H1 (cell line): ENCODE measurements at regions of chr15 and their contacts with region 1.

Region 1: GRCh38 chr15:90482124-90483011 is 47.4 kb upstream of the CRTC3 start:
- DNase-seq: peak in 1 of 2 experiments; percentile 55
- H3K4me3 ChIP-seq: no peak overlapping the region
- H3K27ac ChIP-seq: no peak overlapping the region
- H3K4me1 ChIP-seq: no peaks in the 10 kb centered on the region
- H3K27me3 ChIP-seq: no peaks in the 10 kb centered on the region
- CTCF ChIP-seq: peak in 2 of 3 experiments; percentile 75; a peak in 3 of 4 replicates
- EP300 ChIP-seq: no peak
- POLR2A ChIP-seq: no peak
- RAD21 ChIP-seq: peak; percentile 93

Region 2: DNA sequence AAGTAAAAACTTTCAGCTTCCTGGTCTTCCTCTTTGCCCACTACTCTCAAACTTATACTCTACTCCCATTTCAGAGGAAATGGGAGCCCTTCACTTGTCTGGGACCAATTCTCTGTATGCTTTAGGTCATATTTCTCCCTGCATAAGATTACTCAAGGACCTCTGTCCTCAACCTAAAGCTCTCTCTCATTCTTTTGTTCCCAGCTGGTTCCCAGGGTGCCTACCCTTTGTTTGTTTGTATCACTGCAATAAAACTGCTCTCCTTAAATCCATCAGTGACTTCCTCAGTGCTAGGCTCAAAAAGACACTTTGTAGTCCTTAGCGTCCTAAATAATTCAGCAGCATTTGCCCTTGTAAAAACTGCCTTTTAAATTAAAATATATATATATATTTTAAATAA is 214.0 kb before region 1 on chr15:
- CTCF ChIA-PET with region 1: no interaction called
- POLR2A ChIA-PET with region 1: no interaction called
- DNase-seq: no peak
- H3K4me3 ChIP-seq: peak overlapping the region in 2 of 4 experiments; percentile 2 to 76; a peak in 1 of 8 replicates
- H3K27ac ChIP-seq: no peak overlapping the region
- H3K4me1 ChIP-seq: peaks cover 0 to 15% (median 7%) of the 10 kb centered on the region in 4 experiments; a peak in 5 of 7 replicates
- H3K27me3 ChIP-seq: no peaks in the 10 kb centered on the region
- CTCF ChIP-seq: no peak
- EP300 ChIP-seq: no peak
- POLR2A ChIP-seq: no peak
- RAD21 ChIP-seq: no peak

Region 3: GRCh38 chr15:90291679-90292356 is 190.6 kb before region 1 on chr15:
- CTCF ChIA-PET with region 1: interaction called, 18 read pairs
- POLR2A ChIA-PET with region 1: no interaction called
- DNase-seq: no peak
- H3K4me3 ChIP-seq: no peak overlapping the region
- H3K27ac ChIP-seq: no peak overlapping the region
- H3K4me1 ChIP-seq: peaks cover 0 to 12% (median 6%) of the 10 kb centered on the region in 4 experiments; a peak in 6 of 7 replicates
- H3K27me3 ChIP-seq: no peaks in the 10 kb centered on the region
- CTCF ChIP-seq: no peak
- EP300 ChIP-seq: no peak
- POLR2A ChIP-seq: no peak
- RAD21 ChIP-seq: no peak

Region 4: DNA sequence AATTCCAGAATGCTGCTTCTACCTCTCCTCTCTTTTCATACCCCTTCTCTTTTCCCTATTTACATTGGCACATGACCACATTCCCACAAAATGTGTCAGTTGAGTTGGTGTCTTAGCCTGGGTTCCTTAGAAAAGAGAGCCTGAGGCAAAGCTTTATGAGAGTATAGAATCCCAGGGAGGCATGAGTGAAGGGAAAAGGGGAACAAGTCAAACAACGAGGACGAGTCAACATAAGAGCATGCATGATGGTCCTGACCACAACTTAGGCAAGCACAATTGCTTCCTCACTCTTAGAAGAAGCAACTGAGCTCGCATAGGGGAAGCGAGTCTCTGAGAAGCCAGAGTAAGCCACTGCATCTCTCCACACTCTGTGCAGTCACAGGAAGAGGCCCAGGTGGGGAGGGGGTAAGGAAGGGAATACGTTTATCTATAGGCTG is 145.6 kb before region 1 on chr15:
- CTCF ChIA-PET with region 1: interaction called, 13 read pairs
- POLR2A ChIA-PET with region 1: no interaction called
- DNase-seq: no peak
- H3K4me3 ChIP-seq: no peak overlapping the region
- H3K27ac ChIP-seq: no peak overlapping the region
- H3K4me1 ChIP-seq: no peaks in the 10 kb centered on the region
- H3K27me3 ChIP-seq: no peaks in the 10 kb centered on the region
- CTCF ChIP-seq: no peak
- EP300 ChIP-seq: no peak
- POLR2A ChIP-seq: no peak
- RAD21 ChIP-seq: no peak

Region 5: GRCh38 chr15:90382305-90382704 is 100.1 kb before region 1 on chr15:
- CTCF ChIA-PET with region 1: interaction called, 12 read pairs
- POLR2A ChIA-PET with region 1: no interaction called
- DNase-seq: no peak
- H3K4me3 ChIP-seq: no peak overlapping the region
- H3K27ac ChIP-seq: no peak overlapping the region
- H3K4me1 ChIP-seq: no peaks in the 10 kb centered on the region
- H3K27me3 ChIP-seq: no peaks in the 10 kb centered on the region
- CTCF ChIP-seq: no peak
- EP300 ChIP-seq: no peak
- POLR2A ChIP-seq: no peak
- RAD21 ChIP-seq: no peak

Region 6: GRCh38 chr15:90463381-90463780 is 19.0 kb before region 1 on chr15:
- CTCF ChIA-PET with region 1: interaction called, 21 read pairs
- POLR2A ChIA-PET with region 1: no interaction called
- DNase-seq: no peak
- H3K4me3 ChIP-seq: no peak overlapping the region
- H3K27ac ChIP-seq: no peak overlapping the region
- H3K4me1 ChIP-seq: no peaks in the 10 kb centered on the region
- H3K27me3 ChIP-seq: no peaks in the 10 kb centered on the region
- CTCF ChIP-seq: no peak
- EP300 ChIP-seq: no peak
- POLR2A ChIP-seq: no peak
- RAD21 ChIP-seq: no peak